CD4-positive, alpha-beta memory T cell (primary cell): ENCODE measurements at regions of chr5 and their contacts with region 1.

Region 1: GRCh38 chr5:144203750-144204596 is 33.3 kb downstream of the KCTD16 start:
- DNase-seq: peak in 4 of 5 donors; percentile 36 to 55 (median 38)
- H3K4me3 ChIP-seq: no peak overlapping the region
- H3K4me3 Mint-ChIP-seq: no peak overlapping the region
- H3K27ac ChIP-seq: no peak overlapping the region
- H3K27ac Mint-ChIP-seq: no peak overlapping the region
- H3K4me1 ChIP-seq: no peaks in the 10 kb centered on the region
- H3K4me1 Mint-ChIP-seq: peaks cover 4 to 6% (median 5%) of the 10 kb centered on the region in 4 donors
- H3K27me3 ChIP-seq: peaks cover 4% of the 10 kb centered on the region
- H3K27me3 Mint-ChIP-seq: peaks cover 37 to 48% of the 10 kb centered on the region in 2 donors

Region 2: GRCh38 chr5:144108131-144108530 is 95.8 kb before region 1 on chr5:
- CTCF ChIA-PET with region 1: no interaction called
- POLR2A ChIA-PET with region 1: no interaction called
- intact Hi-C with region 1: no loop called
- DNase-seq: no peak
- H3K4me3 ChIP-seq: no peak overlapping the region
- H3K4me3 Mint-ChIP-seq: no peak overlapping the region
- H3K27ac ChIP-seq: no peak overlapping the region
- H3K27ac Mint-ChIP-seq: no peak overlapping the region
- H3K4me1 ChIP-seq: no peaks in the 10 kb centered on the region
- H3K4me1 Mint-ChIP-seq: no peaks in the 10 kb centered on the region
- H3K27me3 ChIP-seq: peaks cover 4% of the 10 kb centered on the region
- H3K27me3 Mint-ChIP-seq: peaks cover 10 to 16% of the 10 kb centered on the region in 2 donors

Region 3: GRCh38 chr5:144170276-144171024 is 33.5 kb before region 1 on chr5 and contains the starts of genes KCTD16 and YIPF5:
- CTCF ChIA-PET with region 1: interaction called, 12 read pairs
- POLR2A ChIA-PET with region 1: no interaction called
- intact Hi-C with region 1: no loop called
- DNase-seq: peak; percentile 96 to 99 (median 98)
- H3K4me3 ChIP-seq: peak within 1 kb of the TSS; percentile 66 to 97
- H3K4me3 Mint-ChIP-seq: peak within 1 kb of the TSS; percentile 84 to 98 (median 93)
- H3K27ac ChIP-seq: peak within 1 kb of the TSS; percentile 92
- H3K27ac Mint-ChIP-seq: peak within 1 kb of the TSS; percentile 90 to 99 (median 94)
- H3K4me1 ChIP-seq: peaks cover 44% of the 10 kb centered on the region
- H3K4me1 Mint-ChIP-seq: peaks cover 27 to 50% (median 45%) of the 10 kb centered on the region in 4 donors
- H3K27me3 ChIP-seq: no peaks in the 10 kb centered on the region
- H3K27me3 Mint-ChIP-seq: no peaks in the 10 kb centered on the region
- total RNA-seq, gene KCTD16: 0.14 to 0.20 TPM
- total RNA-seq, gene YIPF5: 50.5 to 56.3 TPM

Region 4: DNA sequence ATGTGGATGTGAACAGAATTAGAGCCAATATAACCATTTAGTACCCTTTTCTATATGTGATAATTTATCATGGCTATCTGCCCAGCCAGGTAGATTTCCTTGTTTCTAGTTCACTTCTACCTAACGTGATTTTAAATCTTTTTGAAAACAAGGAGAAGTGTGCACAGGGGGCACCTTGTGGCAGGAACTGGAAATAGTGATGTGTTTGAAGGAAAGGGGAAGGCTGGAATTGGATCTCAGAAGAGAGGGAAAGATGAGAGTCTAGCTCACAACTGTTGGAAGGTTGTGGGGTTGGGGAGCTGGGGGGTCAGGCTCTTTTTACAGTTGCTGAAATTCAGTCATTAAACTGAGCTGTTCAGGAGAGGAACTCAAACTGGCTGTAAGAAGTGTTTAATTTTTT is 186.2 kb after region 1 on chr5:
- CTCF ChIA-PET with region 1: no interaction called
- POLR2A ChIA-PET with region 1: no interaction called
- intact Hi-C with region 1: no loop called
- DNase-seq: no peak
- H3K4me3 ChIP-seq: no peak overlapping the region
- H3K4me3 Mint-ChIP-seq: no peak overlapping the region
- H3K27ac ChIP-seq: no peak overlapping the region
- H3K27ac Mint-ChIP-seq: no peak overlapping the region
- H3K4me1 ChIP-seq: no peaks in the 10 kb centered on the region
- H3K4me1 Mint-ChIP-seq: no peaks in the 10 kb centered on the region
- H3K27me3 ChIP-seq: no peaks in the 10 kb centered on the region
- H3K27me3 Mint-ChIP-seq: no peaks in the 10 kb centered on the region

Region 5: DNA sequence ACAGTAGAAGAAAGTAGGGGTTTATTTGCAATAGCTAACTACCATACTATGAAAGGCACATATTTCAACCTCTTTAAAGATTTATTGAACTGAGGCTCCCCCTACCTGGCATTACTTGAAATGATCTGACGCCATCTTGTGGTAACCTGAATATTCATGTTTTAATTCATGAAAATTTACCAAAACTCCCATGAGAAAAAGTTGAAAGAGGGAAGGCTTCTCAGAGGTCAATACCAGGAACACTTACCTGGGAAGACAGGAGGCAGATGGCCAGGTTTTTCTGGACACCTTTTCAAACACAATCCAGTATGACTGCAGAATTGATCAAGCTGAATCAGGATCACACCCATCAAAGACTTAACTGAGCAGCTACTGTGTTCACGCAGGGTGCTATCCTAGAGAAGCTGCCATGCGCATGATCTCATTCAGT is 1621.8 kb after region 1 on chr5:
- CTCF ChIA-PET with region 1: interaction called, 30 read pairs
- POLR2A ChIA-PET with region 1: no interaction called
- intact Hi-C with region 1: no loop called
- DNase-seq: peak in 4 of 5 donors; percentile 14 to 26 (median 16)
- H3K4me3 ChIP-seq: no peak overlapping the region
- H3K4me3 Mint-ChIP-seq: no peak overlapping the region
- H3K27ac ChIP-seq: no peak overlapping the region
- H3K27ac Mint-ChIP-seq: no peak overlapping the region
- H3K4me1 ChIP-seq: no peaks in the 10 kb centered on the region
- H3K4me1 Mint-ChIP-seq: peaks cover 0 to 5% (median 2%) of the 10 kb centered on the region in 4 donors
- H3K27me3 ChIP-seq: no peaks in the 10 kb centered on the region
- H3K27me3 Mint-ChIP-seq: no peaks in the 10 kb centered on the region

Region 6: GRCh38 chr5:146130440-146131045 is 1926.6 kb after region 1 on chr5:
- CTCF ChIA-PET with region 1: interaction called, 5 read pairs
- POLR2A ChIA-PET with region 1: no interaction called
- intact Hi-C with region 1: loop called (anchors 2 kb)
- DNase-seq: peak in 3 of 5 donors; percentile 8 to 13 (median 8)
- H3K4me3 ChIP-seq: no peak overlapping the region
- H3K4me3 Mint-ChIP-seq: no peak overlapping the region
- H3K27ac ChIP-seq: no peak overlapping the region
- H3K27ac Mint-ChIP-seq: no peak overlapping the region
- H3K4me1 ChIP-seq: no peaks in the 10 kb centered on the region
- H3K4me1 Mint-ChIP-seq: peaks cover 0 to 1% (median 0%) of the 10 kb centered on the region in 4 donors
- H3K27me3 ChIP-seq: no peaks in the 10 kb centered on the region
- H3K27me3 Mint-ChIP-seq: no peaks in the 10 kb centered on the region